Mammary epithelial cell (primary cell): ENCODE measurements at regions of chr7 and their contacts with region 1.

Region 1: DNA sequence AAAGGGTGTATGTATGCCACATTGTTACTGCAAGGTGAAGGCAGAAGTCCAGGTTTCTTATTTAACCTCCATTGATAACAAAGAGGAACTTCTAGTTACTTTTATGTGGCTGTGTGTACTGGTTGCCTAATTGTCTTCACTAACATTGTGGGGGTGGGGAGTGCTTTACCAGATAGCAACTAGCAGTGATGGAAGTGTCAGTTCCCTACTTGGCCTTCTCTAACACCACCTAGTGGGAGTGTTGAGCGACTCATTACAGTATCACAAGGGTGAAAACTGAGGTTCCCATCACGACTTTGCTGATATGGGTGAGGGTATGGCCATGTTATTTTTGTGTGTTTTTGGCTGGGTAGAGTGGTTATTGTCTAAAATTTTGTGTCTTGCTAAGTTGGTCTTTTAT is 274.4 kb downstream of the THSD7A start:
- DNase-seq: peak; percentile 30
- H3K4me3 ChIP-seq: no peak overlapping the region
- H3K27ac ChIP-seq: no peak overlapping the region
- H3K4me1 ChIP-seq: no peaks in the 10 kb centered on the region
- H3K27me3 ChIP-seq: peaks cover 4% of the 10 kb centered on the region
- CTCF ChIP-seq: peak; percentile 30 to 61

Region 2: GRCh38 chr7:11373546-11374142 is 184.0 kb before region 1 on chr7:
- CTCF ChIA-PET with region 1: no interaction called
- dilution Hi-C with region 1: no loop called
- in situ Hi-C with region 1: no loop called
- intact Hi-C with region 1: loop called (anchors 5 kb)
- DNase-seq: peak; percentile 3
- H3K4me3 ChIP-seq: no peak overlapping the region
- H3K27ac ChIP-seq: no peak overlapping the region
- H3K4me1 ChIP-seq: no peaks in the 10 kb centered on the region
- H3K27me3 ChIP-seq: peaks cover 2% of the 10 kb centered on the region
- CTCF ChIP-seq: peak; percentile 56 to 62

Region 3: GRCh38 chr7:11810043-11810625 is 252.5 kb after region 1 on chr7:
- CTCF ChIA-PET with region 1: no interaction called
- dilution Hi-C with region 1: no loop called
- in situ Hi-C with region 1: no loop called
- intact Hi-C with region 1: no loop called
- DNase-seq: no peak
- H3K4me3 ChIP-seq: no peak overlapping the region
- H3K27ac ChIP-seq: no peak overlapping the region
- H3K4me1 ChIP-seq: no peaks in the 10 kb centered on the region
- H3K27me3 ChIP-seq: no peaks in the 10 kb centered on the region
- CTCF ChIP-seq: no peak